Cardiac septum (tissue), 1 donor: ENCODE measurements at regions of chr13 and their contacts with region 1.

Region 1: DNA sequence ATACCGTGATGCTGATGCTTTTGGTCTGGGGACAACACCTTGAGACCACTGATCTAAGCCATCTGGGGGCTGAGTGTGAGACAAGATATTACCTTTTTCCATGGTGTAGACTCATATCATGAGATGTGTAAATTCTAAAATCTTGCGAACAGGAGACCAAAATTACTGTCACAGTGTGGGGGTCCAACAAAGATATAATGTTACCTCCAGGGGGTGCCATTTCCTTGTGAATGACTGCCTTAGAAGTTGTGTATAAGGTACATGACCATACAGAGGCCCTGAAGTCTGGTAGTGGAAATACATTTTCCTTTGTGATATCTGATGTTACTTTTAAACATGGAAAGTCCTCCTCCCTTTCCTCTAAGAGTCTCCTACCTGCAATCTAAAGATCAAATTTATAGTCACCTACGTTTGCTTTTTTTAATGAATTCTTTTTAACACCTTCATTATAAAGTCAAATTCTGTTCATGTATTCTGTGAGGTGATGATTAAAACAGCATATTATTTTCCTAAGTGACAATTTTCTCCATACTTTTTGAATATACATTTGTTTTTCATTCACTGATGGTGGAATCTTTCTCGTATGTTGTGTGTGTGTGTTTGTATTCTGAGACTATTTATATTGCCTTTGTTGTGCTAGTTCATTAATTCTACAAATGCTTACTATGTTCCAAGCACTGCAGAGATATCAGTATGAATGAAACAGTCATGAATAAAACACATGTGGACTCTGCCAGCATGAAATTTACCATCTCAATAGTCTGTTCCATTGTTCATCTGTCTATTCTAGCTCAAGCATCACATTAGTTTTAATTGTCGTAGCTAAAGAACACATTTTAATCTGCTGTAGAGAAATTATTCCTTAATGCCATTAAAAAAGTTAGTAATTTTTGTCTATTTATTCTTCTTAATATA is 113.7 kb downstream of the RFC3 start:
- DNase-seq: no peak

Region 2: GRCh38 chr13:34076943-34077703 is 145.5 kb after region 1 on chr13:
- intact Hi-C with region 1: loop called (anchors 2 kb)
- DNase-seq: no peak

Region 3: GRCh38 chr13:35157143-35157755 is 1225.6 kb after region 1 on chr13:
- intact Hi-C with region 1: loop called (anchors 5 kb)
- DNase-seq: no peak